ENCODE measurements at regions of chr1 and their contacts with region 1.

Region 1: GRCh38 chr1:13806108-13806507 is 106.1 kb downstream of the PRDM2 start:
- DNase-seq: no peak
- ATAC-seq: no peak
- H3K4me3 ChIP-seq: no peak overlapping the region
- H3K4me3 Mint-ChIP-seq: no peak overlapping the region
- H3K27ac ChIP-seq: no peak overlapping the region
- H3K27ac Mint-ChIP-seq: peak overlapping the region in 1 of 9 donors; percentile 26
- H3K4me1 ChIP-seq: no peaks in the 10 kb centered on the region
- H3K4me1 Mint-ChIP-seq: peaks cover 6 to 40% (median 27%) of the 10 kb centered on the region in 7 donors
- H3K27me3 ChIP-seq: no peaks in the 10 kb centered on the region
- H3K27me3 Mint-ChIP-seq: no peaks in the 10 kb centered on the region

Region 2: GRCh38 chr1:13759088-13759487 is 47.0 kb before region 1 on chr1:
- CTCF ChIA-PET with region 1: no interaction called
- POLR2A ChIA-PET with region 1: no interaction called
- intact Hi-C with region 1: loop called in 1 of 2 experiments (anchors 1 kb)
- DNase-seq: peak in 2 of 9 donors; percentile 10 to 23
- ATAC-seq: peak; percentile 44
- H3K4me3 ChIP-seq: no peak overlapping the region
- H3K4me3 Mint-ChIP-seq: peak overlapping the region in 8 of 10 donors; percentile 9 to 57 (median 37)
- H3K27ac ChIP-seq: no peak overlapping the region
- H3K27ac Mint-ChIP-seq: peak overlapping the region in 5 of 9 donors; percentile 31 to 75 (median 71)
- H3K4me1 ChIP-seq: peaks cover 67 to 71% of the 10 kb centered on the region in 2 donors
- H3K4me1 Mint-ChIP-seq: peaks cover 54 to 97% (median 92%) of the 10 kb centered on the region in 7 donors
- H3K27me3 ChIP-seq: no peaks in the 10 kb centered on the region
- H3K27me3 Mint-ChIP-seq: no peaks in the 10 kb centered on the region